Mammary epithelial cell (primary cell): ENCODE measurements at regions of chr1 and their contacts with region 1.

Region 1: GRCh38 chr1:61049850-61050540 is 32.4 kb upstream of the NFIA start:
- DNase-seq: peak; percentile 80
- H3K4me3 ChIP-seq: peak overlapping the region; percentile 56 to 72 (median 65)
- H3K27ac ChIP-seq: no peak overlapping the region
- H3K4me1 ChIP-seq: peaks cover 19% of the 10 kb centered on the region
- H3K27me3 ChIP-seq: no peaks in the 10 kb centered on the region
- CTCF ChIP-seq: peak; percentile 91 to 98

Region 2: GRCh38 chr1:60978421-60979357 is 71.3 kb before region 1 on chr1:
- CTCF ChIA-PET with region 1: no interaction called
- dilution Hi-C with region 1: no loop called
- in situ Hi-C with region 1: loop called (anchors 5 to 10 kb)
- intact Hi-C with region 1: no loop called
- DNase-seq: peak; percentile 38
- H3K4me3 ChIP-seq: no peak overlapping the region
- H3K27ac ChIP-seq: no peak overlapping the region
- H3K4me1 ChIP-seq: peaks cover 4% of the 10 kb centered on the region
- H3K27me3 ChIP-seq: no peaks in the 10 kb centered on the region
- CTCF ChIP-seq: peak; percentile 89 to 90

Region 3: GRCh38 chr1:61210435-61211154 is 160.6 kb after region 1 on chr1:
- CTCF ChIA-PET with region 1: no interaction called
- dilution Hi-C with region 1: no loop called
- in situ Hi-C with region 1: no loop called
- intact Hi-C with region 1: loop called (anchors 5 kb)
- DNase-seq: no peak
- H3K4me3 ChIP-seq: no peak overlapping the region
- H3K27ac ChIP-seq: no peak overlapping the region
- H3K4me1 ChIP-seq: no peaks in the 10 kb centered on the region
- H3K27me3 ChIP-seq: no peaks in the 10 kb centered on the region
- CTCF ChIP-seq: peak in 1 of 2 donors; percentile 29

Region 4: GRCh38 chr1:61588736-61589672 is 539.0 kb after region 1 on chr1:
- CTCF ChIA-PET with region 1: no interaction called
- dilution Hi-C with region 1: no loop called
- in situ Hi-C with region 1: no loop called
- intact Hi-C with region 1: loop called (anchors 2 kb)
- DNase-seq: peak; percentile 63
- H3K4me3 ChIP-seq: no peak overlapping the region
- H3K27ac ChIP-seq: no peak overlapping the region
- H3K4me1 ChIP-seq: peaks cover 11% of the 10 kb centered on the region
- H3K27me3 ChIP-seq: no peaks in the 10 kb centered on the region
- CTCF ChIP-seq: peak; percentile 91 to 92